Caco-2 (cell line): ENCODE measurements at regions of chr17 and their contacts with region 1.

Region 1: GRCh38 chr17:64129764-64130558 is at the start of gene ERN1:
- DNase-seq: peak; percentile 93 to 95
- H3K4me3 ChIP-seq: peak within 1 kb of the TSS; percentile 78
- H3K4me3 Mint-ChIP-seq: peak within 1 kb of the TSS; percentile 91
- H3K27ac Mint-ChIP-seq: peak within 1 kb of the TSS; percentile 88
- H3K4me1 ChIP-seq: peaks cover 21% of the 10 kb centered on the region
- H3K4me1 Mint-ChIP-seq: peaks cover 16% of the 10 kb centered on the region
- H3K27me3 ChIP-seq: no peaks in the 10 kb centered on the region
- H3K27me3 Mint-ChIP-seq: no peaks in the 10 kb centered on the region
- CTCF ChIP-seq: peak in 1 of 2 experiments; percentile 4
- total RNA-seq, gene ERN1: 24.3 and 27.5 TPM in 2 replicates

Region 2: GRCh38 chr17:63919311-63919723 is 210.6 kb before region 1 on chr17:
- CTCF ChIA-PET with region 1: interaction called, 21 read pairs
- POLR2A ChIA-PET with region 1: no interaction called
- intact Hi-C with region 1: loop called (anchors 2 kb)
- DNase-seq: peak; percentile 66 to 77
- H3K4me3 ChIP-seq: no peak overlapping the region
- H3K4me3 Mint-ChIP-seq: no peak overlapping the region
- H3K27ac Mint-ChIP-seq: no peak overlapping the region
- H3K4me1 ChIP-seq: no peaks in the 10 kb centered on the region
- H3K4me1 Mint-ChIP-seq: no peaks in the 10 kb centered on the region
- H3K27me3 ChIP-seq: no peaks in the 10 kb centered on the region
- H3K27me3 Mint-ChIP-seq: peaks cover 18% of the 10 kb centered on the region
- CTCF ChIP-seq: peak; percentile 92 to 94

Region 3: DNA sequence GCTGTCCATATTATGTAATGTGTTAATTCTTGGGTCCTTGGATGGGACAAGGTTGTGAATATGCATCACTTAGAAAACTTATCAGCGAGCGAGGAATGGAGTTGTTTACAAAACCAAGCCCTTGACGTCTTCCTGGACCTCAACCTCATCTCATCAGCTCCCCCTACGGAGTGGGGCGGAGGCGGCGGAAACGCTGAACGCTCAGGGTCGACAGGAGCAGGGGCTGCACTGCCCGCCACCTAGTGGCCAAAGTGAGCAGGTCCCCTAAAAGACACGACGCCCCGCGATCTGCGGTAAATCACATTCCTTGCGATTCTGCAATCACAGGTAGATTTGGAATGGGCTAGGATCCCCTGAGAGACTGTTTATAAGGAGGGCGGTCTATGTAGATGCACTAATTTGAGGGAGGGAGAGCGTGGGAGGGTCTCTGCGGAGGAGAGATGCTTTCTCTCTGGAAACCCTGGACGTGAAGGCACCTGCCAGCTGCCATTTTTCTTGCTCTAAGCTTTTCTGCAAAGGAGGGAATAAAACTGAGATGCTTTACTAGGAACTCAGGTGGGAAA is 104.1 kb before region 1 on chr17:
- CTCF ChIA-PET with region 1: interaction called, 277 read pairs
- POLR2A ChIA-PET with region 1: interaction called, 8 read pairs
- intact Hi-C with region 1: loop called (anchors 1 kb)
- DNase-seq: peak; percentile 86 to 87
- H3K4me3 ChIP-seq: peak overlapping the region; percentile 13; the same call in 1 of the 2 replicates
- H3K4me3 Mint-ChIP-seq: peak overlapping the region; percentile 71
- H3K27ac Mint-ChIP-seq: no peak overlapping the region
- H3K4me1 ChIP-seq: no peaks in the 10 kb centered on the region
- H3K4me1 Mint-ChIP-seq: peaks cover 16% of the 10 kb centered on the region
- H3K27me3 ChIP-seq: no peaks in the 10 kb centered on the region
- H3K27me3 Mint-ChIP-seq: no peaks in the 10 kb centered on the region
- CTCF ChIP-seq: peak; percentile 96 to 97

Region 4: DNA sequence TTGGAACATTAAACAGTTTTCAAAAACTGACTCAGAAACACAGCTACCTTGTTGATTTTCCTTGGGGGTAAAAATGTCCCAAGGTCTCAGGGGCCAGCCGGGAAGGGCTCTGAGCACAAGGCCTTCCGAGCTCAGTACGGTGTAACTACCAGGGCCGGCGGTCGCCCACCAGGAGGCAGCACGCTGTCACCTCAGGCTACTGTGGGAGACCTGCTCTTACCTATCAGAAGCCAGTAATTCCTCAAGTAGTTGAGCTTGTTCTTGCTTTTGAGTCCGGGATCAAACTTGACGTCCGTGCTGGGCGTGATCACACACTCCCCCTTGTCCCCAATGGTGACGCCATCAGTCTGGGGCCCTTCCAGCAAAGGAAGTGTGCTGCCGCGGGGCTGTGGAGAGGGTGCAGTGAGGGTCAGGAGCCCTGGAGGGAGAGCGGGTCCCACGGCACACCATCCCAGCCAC is 66.2 kb before region 1 on chr17:
- CTCF ChIA-PET with region 1: interaction called, 206 read pairs
- POLR2A ChIA-PET with region 1: interaction called, 5 read pairs
- intact Hi-C with region 1: loop called (anchors 1 kb)
- DNase-seq: peak; percentile 73 to 81
- H3K4me3 ChIP-seq: no peak overlapping the region
- H3K4me3 Mint-ChIP-seq: no peak overlapping the region
- H3K27ac Mint-ChIP-seq: no peak overlapping the region
- H3K4me1 ChIP-seq: no peaks in the 10 kb centered on the region
- H3K4me1 Mint-ChIP-seq: peaks cover 11% of the 10 kb centered on the region
- H3K27me3 ChIP-seq: no peaks in the 10 kb centered on the region
- H3K27me3 Mint-ChIP-seq: no peaks in the 10 kb centered on the region
- CTCF ChIP-seq: peak; percentile 65 to 80

Region 5: GRCh38 chr17:64117981-64118979 is 11.7 kb before region 1 on chr17:
- CTCF ChIA-PET with region 1: interaction called, 7 read pairs
- POLR2A ChIA-PET with region 1: interaction called, 4 read pairs
- intact Hi-C with region 1: loop called (anchors 2 kb)
- DNase-seq: no peak
- H3K4me3 ChIP-seq: no peak overlapping the region
- H3K4me3 Mint-ChIP-seq: no peak overlapping the region
- H3K27ac Mint-ChIP-seq: peak overlapping the region; percentile 60
- H3K4me1 ChIP-seq: peaks cover 13% of the 10 kb centered on the region; the same call in 1 of the 2 replicates
- H3K4me1 Mint-ChIP-seq: peaks cover 9% of the 10 kb centered on the region
- H3K27me3 ChIP-seq: no peaks in the 10 kb centered on the region
- H3K27me3 Mint-ChIP-seq: no peaks in the 10 kb centered on the region
- CTCF ChIP-seq: no peak

Region 6: GRCh38 chr17:64245218-64246145 is 115.5 kb after region 1 on chr17:
- CTCF ChIA-PET with region 1: no interaction called
- POLR2A ChIA-PET with region 1: no interaction called
- intact Hi-C with region 1: no loop called
- DNase-seq: no peak
- H3K4me3 ChIP-seq: no peak overlapping the region
- H3K4me3 Mint-ChIP-seq: no peak overlapping the region
- H3K27ac Mint-ChIP-seq: no peak overlapping the region
- H3K4me1 ChIP-seq: peaks cover 27% of the 10 kb centered on the region
- H3K4me1 Mint-ChIP-seq: peaks cover 22% of the 10 kb centered on the region
- H3K27me3 ChIP-seq: no peaks in the 10 kb centered on the region
- H3K27me3 Mint-ChIP-seq: no peaks in the 10 kb centered on the region
- CTCF ChIP-seq: no peak

Region 7: GRCh38 chr17:64281962-64282727 is 152.2 kb after region 1 on chr17:
- CTCF ChIA-PET with region 1: interaction called, 4 read pairs
- POLR2A ChIA-PET with region 1: no interaction called
- intact Hi-C with region 1: loop called (anchors 1 kb)
- DNase-seq: peak; percentile 53 to 67
- H3K4me3 ChIP-seq: no peak overlapping the region
- H3K4me3 Mint-ChIP-seq: no peak overlapping the region
- H3K27ac Mint-ChIP-seq: no peak overlapping the region
- H3K4me1 ChIP-seq: peaks cover 10% of the 10 kb centered on the region; the same call in 1 of the 2 replicates
- H3K4me1 Mint-ChIP-seq: peaks cover 6% of the 10 kb centered on the region
- H3K27me3 ChIP-seq: no peaks in the 10 kb centered on the region
- H3K27me3 Mint-ChIP-seq: no peaks in the 10 kb centered on the region
- CTCF ChIP-seq: peak; percentile 80 to 85

Region 8: GRCh38 chr17:64420143-64420971 is 290.4 kb after region 1 on chr17:
- CTCF ChIA-PET with region 1: no interaction called
- POLR2A ChIA-PET with region 1: no interaction called
- intact Hi-C with region 1: loop called (anchors 5 kb)
- DNase-seq: peak in 1 of 2 experiments; percentile 66
- H3K4me3 ChIP-seq: no peak overlapping the region
- H3K4me3 Mint-ChIP-seq: no peak overlapping the region
- H3K27ac Mint-ChIP-seq: no peak overlapping the region
- H3K4me1 ChIP-seq: peaks cover 5% of the 10 kb centered on the region; the same call in 1 of the 2 replicates
- H3K4me1 Mint-ChIP-seq: no peaks in the 10 kb centered on the region
- H3K27me3 ChIP-seq: no peaks in the 10 kb centered on the region
- H3K27me3 Mint-ChIP-seq: no peaks in the 10 kb centered on the region
- CTCF ChIP-seq: peak; percentile 66 to 72